Activated T-helper 2 cell treated with anti-CD3 and anti-CD28 coated beads, Interferon-gamma antibody, Interleukin-2, Interleukin-4, amounts not matched to agents 10 μg/mL and 5 μg/mL and 100 μg/mL, durations not matched to agents 14 hours and 24 hours and 36 hours (primary cell): ENCODE measurements at regions of chr2 and their contacts with region 1.

Region 1: DNA sequence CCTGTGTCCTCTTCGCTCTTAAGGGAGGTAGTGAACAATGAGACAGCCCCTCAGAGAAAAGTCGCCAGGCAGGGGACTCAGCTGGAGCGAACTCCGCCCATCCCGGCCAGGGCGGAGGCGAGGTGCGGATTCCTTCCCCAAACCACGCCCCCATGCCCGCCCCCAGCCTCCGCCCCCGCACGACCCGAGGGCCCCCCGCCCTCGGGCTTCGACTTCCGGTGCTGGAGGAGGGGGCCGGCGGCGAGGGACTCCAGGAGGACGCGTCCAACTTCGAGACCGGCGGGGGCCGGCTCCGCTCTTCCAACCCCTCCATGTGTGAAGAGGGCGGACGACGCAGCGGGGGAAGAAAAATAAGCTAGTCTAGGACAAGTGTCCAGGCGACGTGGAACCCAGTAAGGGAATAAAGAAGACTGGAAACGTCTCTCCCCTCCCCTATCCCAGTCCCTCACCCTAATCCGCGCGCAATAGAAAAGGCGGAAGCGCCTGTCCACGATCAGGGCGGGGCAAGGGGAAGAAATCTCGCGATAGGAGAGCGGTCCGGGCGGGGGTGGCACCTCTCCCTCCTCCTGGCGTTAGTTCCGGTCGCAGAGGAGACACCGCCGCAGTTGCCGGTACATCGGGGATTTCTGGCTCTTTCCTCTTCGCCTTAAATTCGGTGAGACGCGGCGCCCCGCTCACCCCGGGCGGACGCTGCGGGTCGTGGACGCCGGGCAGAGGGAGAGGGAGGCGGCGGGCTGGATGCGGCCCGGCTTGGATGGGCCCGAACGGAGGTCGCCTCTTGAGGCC is at the start of gene BZW1:
- DNase-seq: peak; percentile 94
- H3K4me3 Mint-ChIP-seq: peak within 1 kb of the TSS; percentile 97
- H3K27ac Mint-ChIP-seq: peak within 1 kb of the TSS; percentile 96
- H3K4me1 Mint-ChIP-seq: peaks cover 40% of the 10 kb centered on the region
- H3K27me3 Mint-ChIP-seq: no peaks in the 10 kb centered on the region
- total RNA-seq, gene BZW1: 548 and 571 TPM in 2 replicates

Region 2: GRCh38 chr2:200319548-200320337 is 491.8 kb before region 1 on chr2:
- intact Hi-C with region 1: loop called (anchors 2 kb)
- DNase-seq: no peak
- H3K4me3 Mint-ChIP-seq: no peak overlapping the region
- H3K27ac Mint-ChIP-seq: no peak overlapping the region
- H3K4me1 Mint-ChIP-seq: peaks cover 73% of the 10 kb centered on the region
- H3K27me3 Mint-ChIP-seq: no peaks in the 10 kb centered on the region

Region 3: DNA sequence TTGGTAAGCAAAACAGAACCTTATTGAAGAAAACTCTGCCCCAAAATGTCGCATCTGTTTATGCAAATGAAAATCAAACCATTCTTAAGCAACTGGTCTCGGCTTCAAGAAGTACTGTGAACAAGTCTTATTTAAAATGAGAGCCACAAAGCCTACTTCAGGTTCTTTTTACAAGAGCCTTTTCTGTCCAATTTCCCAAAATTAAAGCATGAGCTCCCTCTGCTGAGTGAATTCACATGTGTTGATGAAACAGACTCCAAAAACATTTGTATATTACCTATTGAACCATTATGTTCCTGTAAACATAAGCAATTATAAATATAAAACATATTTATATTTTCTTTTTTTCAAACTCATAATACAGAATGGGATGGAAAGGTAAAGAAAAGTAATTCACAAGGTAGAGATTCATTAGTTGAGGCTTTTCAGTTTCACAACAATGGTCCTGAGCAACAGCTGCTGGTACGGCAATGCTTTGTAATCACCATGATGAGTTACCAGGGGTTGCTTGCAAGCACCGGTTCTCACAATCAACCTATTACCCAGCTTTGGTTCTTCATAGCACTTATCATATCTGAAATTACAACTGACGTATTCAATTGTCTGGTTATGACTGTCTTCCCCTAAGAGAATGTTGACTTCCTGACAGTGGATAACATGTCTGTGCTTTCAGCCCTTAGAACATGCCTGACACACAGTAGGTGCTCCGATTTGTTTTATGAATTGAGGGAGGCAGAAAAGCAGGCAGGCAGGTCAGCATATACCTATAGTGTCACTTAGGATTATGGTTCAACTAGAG is 108.2 kb before region 1 on chr2:
- intact Hi-C with region 1: loop called (anchors 1 kb)
- DNase-seq: no peak
- H3K4me3 Mint-ChIP-seq: peak overlapping the region; percentile 6
- H3K27ac Mint-ChIP-seq: peak overlapping the region; percentile 87
- H3K4me1 Mint-ChIP-seq: peaks cover 47% of the 10 kb centered on the region
- H3K27me3 Mint-ChIP-seq: no peaks in the 10 kb centered on the region

Region 4: DNA sequence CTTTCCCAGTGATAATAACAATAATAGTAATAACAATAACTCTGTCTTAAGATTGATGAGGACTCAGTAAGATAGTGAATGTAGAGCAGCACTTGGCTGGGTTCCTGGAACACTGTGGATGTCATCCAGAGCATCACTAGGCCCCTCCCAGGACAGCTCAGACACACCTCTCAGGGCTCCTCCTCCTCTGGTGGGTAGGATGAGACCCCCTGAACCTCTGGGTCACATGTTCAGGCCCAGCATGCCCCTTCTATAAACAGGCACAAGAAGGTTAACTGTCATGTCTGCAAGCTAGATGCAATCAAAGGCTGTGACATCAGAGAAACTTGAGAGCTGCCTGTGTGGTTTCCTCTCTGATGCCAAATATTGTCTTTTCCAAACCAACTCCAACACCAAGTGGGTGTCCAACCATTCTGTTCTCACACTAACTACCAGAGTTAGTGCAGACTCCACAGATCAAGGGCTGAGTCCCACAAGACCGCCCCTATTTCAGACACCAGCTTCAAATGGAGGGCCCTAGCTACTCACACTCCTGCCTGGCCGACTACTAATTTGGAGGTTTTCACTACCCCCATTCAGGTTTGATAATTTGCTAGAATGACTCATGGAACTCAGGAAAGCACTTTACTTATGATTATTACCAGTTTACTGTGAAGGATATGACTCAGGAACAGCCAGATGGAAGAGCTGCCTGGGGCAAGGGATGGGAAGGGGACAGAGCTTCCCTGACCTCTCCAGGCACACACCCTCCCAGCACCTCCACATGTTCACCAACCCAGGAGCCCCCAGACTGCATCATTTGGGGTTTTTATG is 46.2 kb before region 1 on chr2:
- intact Hi-C with region 1: loop called (anchors 1 kb)
- DNase-seq: peak; percentile 21
- H3K4me3 Mint-ChIP-seq: peak overlapping the region; percentile 41
- H3K27ac Mint-ChIP-seq: peak overlapping the region; percentile 90
- H3K4me1 Mint-ChIP-seq: peaks cover 35% of the 10 kb centered on the region
- H3K27me3 Mint-ChIP-seq: no peaks in the 10 kb centered on the region

Region 5: DNA sequence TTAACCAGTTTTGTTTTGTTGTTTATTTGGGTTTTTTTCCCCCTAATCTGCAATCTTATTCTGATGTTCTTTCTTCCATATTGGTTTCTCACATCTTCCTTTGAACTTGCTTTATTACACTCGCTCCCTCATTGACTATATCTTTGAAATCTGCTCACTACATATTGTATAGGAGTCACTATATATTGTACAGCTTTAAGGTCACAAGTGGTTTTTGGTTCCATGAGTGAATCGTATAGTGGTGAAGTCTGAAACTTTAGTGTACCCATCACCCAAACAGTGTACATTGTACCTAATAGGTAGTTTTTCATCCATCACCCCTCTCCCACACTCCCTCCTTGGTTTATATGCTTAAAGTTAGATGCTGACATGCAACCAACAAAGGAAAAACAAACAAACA is 11.1 kb before region 1 on chr2:
- intact Hi-C with region 1: loop called (anchors 1 kb)
- DNase-seq: no peak
- H3K4me3 Mint-ChIP-seq: no peak overlapping the region
- H3K27ac Mint-ChIP-seq: no peak overlapping the region
- H3K4me1 Mint-ChIP-seq: peaks cover 11% of the 10 kb centered on the region
- H3K27me3 Mint-ChIP-seq: peaks cover 16% of the 10 kb centered on the region

Region 6: DNA sequence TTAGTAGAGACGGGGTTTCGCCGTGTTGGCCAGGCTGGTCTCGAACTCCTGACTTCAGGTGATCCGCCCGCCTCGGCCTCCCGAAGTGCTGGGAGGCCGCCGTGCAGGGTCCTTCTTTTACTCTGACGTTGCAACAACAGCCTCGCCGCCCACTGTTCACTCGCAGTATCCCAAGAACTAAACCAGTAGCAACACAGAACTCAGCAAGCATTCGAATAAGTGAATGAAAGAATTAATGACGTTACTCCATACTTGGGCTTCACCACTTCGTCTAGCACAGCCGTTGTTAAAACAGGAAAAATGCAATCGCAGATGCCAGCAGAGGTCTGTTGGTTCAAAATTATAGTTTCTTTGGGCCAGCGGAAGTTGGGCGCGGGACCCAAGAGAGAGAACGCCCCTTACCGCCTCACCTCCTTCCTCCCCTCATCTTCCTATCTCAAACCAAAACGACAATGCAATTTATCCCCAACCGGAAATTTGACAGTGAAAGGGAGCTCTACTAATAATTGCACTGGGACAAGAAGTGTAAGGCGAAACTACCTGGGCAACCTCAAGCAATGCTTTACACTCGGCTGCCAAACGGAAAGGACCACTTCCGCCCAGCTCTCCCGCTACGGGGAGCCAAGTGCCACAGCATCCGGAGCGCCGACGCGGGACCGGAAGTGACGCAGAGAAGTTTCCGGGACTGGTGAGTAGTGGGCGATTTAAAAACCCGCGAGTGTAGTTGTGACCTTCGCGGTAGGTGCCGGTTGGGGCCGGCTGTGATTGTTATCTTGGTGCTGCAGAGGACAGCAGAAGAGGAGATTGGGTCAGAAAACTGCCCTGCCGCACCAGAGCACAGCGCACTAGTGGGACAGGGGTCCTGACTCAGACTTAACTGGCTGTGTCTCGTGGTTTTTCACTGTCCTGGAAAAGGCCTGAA is 77.4 kb after region 1 on chr2 and contains the starts of genes NIF3L1 and PPIL3:
- intact Hi-C with region 1: loop called (anchors 1 kb)
- DNase-seq: peak; percentile 97
- H3K4me3 Mint-ChIP-seq: peak within 1 kb of the TSS; percentile 95
- H3K27ac Mint-ChIP-seq: peak within 1 kb of the TSS; percentile 100
- H3K4me1 Mint-ChIP-seq: peaks cover 45% of the 10 kb centered on the region
- H3K27me3 Mint-ChIP-seq: no peaks in the 10 kb centered on the region
- total RNA-seq, gene NIF3L1: 23.9 and 24.8 TPM in 2 replicates
- total RNA-seq, gene PPIL3: 55.4 and 57.8 TPM in 2 replicates

Region 7: GRCh38 chr2:201118121-201118960 is 306.8 kb after region 1 on chr2:
- intact Hi-C with region 1: loop called (anchors 2 kb)
- DNase-seq: peak; percentile 76
- H3K4me3 Mint-ChIP-seq: peak overlapping the region; percentile 94
- H3K27ac Mint-ChIP-seq: peak overlapping the region; percentile 95
- H3K4me1 Mint-ChIP-seq: peaks cover 42% of the 10 kb centered on the region
- H3K27me3 Mint-ChIP-seq: no peaks in the 10 kb centered on the region

Region 8: GRCh38 chr2:201320701-201321100 is 509.2 kb after region 1 on chr2:
- intact Hi-C with region 1: no loop called
- DNase-seq: no peak
- H3K4me3 Mint-ChIP-seq: no peak overlapping the region
- H3K27ac Mint-ChIP-seq: no peak overlapping the region
- H3K4me1 Mint-ChIP-seq: no peaks in the 10 kb centered on the region
- H3K27me3 Mint-ChIP-seq: no peaks in the 10 kb centered on the region